ENCODE measurements at regions of chr1 and their contacts with region 1.

Region 1: DNA sequence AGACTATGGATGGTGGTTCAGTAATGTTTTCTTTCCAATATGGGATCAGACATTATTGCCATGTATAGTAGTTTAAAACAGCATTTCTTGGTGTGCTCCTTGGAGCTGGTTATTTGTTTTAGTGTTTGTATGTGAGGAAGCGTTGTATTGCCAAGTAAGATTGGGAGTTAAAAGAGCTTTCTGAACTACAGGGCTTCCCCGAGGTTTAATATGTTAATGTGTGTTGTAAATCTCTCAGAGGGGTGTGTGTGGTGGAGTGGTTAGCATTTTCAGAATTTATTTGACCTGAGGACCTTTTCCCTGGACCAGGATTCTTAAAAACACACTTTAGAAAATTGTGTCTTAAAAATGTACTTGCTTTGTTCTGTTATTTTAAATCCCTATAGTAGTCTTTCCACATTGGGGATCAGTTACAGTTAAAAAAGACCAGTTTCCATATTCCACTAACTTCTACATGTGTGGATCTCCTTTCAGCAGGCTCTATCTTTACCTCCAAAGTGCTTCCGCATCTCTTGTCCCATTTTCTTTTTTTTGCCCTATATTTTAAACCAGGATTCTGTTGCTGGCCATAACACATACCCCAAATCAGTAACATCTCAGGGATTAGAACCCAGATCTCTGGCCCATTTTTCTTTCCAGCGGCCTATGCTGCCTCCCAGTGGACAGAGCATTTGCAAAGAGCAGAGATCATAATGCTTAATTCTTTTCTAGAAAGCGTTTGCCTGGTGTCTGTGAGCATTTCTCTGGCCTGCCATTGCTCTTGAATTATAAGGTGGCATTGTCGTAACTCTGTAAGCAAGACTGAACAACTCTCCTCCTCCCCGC is 58.6 kb downstream of the PBX1 start:
- DNase-seq: peak; percentile 32
- H3K4me3 ChIP-seq: no peak overlapping the region
- H3K27ac ChIP-seq: no peak overlapping the region
- H3K4me1 ChIP-seq: peaks cover 10% of the 10 kb centered on the region
- H3K27me3 ChIP-seq: no peaks in the 10 kb centered on the region
- CTCF ChIP-seq: peak; percentile 38 to 46
- POLR2A ChIP-seq: no peak

Region 2: DNA sequence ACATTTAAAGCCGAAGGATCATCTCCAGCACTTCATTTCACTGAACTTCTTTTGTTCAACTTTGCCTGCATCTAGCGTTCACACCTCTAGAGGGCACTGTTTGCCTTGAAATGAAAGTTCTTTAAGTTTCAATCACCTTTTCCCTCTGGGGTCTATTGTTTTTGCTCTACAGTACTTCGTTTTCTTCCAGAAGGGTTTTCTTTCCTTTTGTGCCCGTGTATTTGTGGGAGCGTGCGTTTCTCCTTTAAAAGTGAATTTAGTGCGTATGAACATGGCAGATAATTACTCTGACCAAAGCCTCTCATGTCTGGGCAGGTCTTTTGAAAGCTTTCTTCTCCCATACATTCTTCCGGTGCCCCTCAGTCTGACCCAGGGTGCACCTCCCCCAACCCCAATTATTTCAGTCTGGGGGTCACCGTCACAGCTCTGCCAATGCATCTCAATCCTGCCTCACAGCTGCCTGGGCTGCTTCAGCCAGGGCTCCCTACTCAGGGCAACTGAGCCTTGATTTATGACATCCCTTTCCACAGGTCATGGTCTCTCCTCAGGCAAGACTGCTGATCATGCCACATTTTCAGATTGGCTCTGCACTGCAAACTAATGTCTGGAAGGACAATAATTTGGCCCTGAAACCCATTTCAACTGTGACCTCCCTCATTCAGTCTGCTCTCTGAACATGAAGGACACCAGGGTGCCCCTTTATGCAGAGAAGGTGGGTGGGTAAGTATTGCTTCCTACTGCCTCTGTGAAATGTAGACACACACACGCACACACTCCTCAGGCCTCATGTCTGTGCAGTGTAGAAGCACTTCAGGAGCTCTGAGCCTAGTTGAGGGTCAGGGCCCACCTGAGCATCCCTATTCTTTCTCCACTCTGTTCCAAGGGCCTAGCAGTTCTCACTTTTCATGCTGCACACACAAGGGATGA is 1207.3 kb before region 1 on chr1:
- CTCF ChIA-PET with region 1: interaction called, 3 read pairs
- POLR2A ChIA-PET with region 1: no interaction called
- dilution Hi-C with region 1: no loop called
- intact Hi-C with region 1: loop called (anchors 1 kb)
- DNase-seq: peak; percentile 66
- H3K4me3 ChIP-seq: no peak overlapping the region
- H3K27ac ChIP-seq: no peak overlapping the region
- H3K4me1 ChIP-seq: no peaks in the 10 kb centered on the region
- H3K27me3 ChIP-seq: peaks cover 0 to 2% of the 10 kb centered on the region in 2 experiments
- CTCF ChIP-seq: peak; percentile 67 to 72
- POLR2A ChIP-seq: no peak

Region 3: GRCh38 chr1:163528710-163529348 is 1088.8 kb before region 1 on chr1:
- CTCF ChIA-PET with region 1: interaction called, 3 read pairs
- POLR2A ChIA-PET with region 1: no interaction called
- dilution Hi-C with region 1: no loop called
- intact Hi-C with region 1: loop called (anchors 5 kb)
- DNase-seq: peak; percentile 48
- H3K4me3 ChIP-seq: no peak overlapping the region
- H3K27ac ChIP-seq: no peak overlapping the region
- H3K4me1 ChIP-seq: no peaks in the 10 kb centered on the region
- H3K27me3 ChIP-seq: no peaks in the 10 kb centered on the region
- CTCF ChIP-seq: peak; percentile 21 to 34
- POLR2A ChIP-seq: no peak

Region 4: GRCh38 chr1:163561580-163562295 is 1055.9 kb before region 1 on chr1:
- CTCF ChIA-PET with region 1: interaction called, 14 read pairs
- POLR2A ChIA-PET with region 1: no interaction called
- dilution Hi-C with region 1: no loop called
- intact Hi-C with region 1: no loop called
- DNase-seq: peak; percentile 27
- H3K4me3 ChIP-seq: no peak overlapping the region
- H3K27ac ChIP-seq: no peak overlapping the region
- H3K4me1 ChIP-seq: no peaks in the 10 kb centered on the region
- H3K27me3 ChIP-seq: no peaks in the 10 kb centered on the region
- CTCF ChIP-seq: peak; percentile 17 to 18
- POLR2A ChIP-seq: no peak

Region 5: GRCh38 chr1:163820766-163821165 is 796.8 kb before region 1 on chr1:
- CTCF ChIA-PET with region 1: no interaction called
- POLR2A ChIA-PET with region 1: no interaction called
- dilution Hi-C with region 1: no loop called
- intact Hi-C with region 1: loop called (anchors 5 kb)
- DNase-seq: peak; percentile 11
- H3K4me3 ChIP-seq: no peak overlapping the region
- H3K27ac ChIP-seq: no peak overlapping the region
- H3K4me1 ChIP-seq: no peaks in the 10 kb centered on the region
- H3K27me3 ChIP-seq: no peaks in the 10 kb centered on the region
- CTCF ChIP-seq: no peak
- POLR2A ChIP-seq: no peak

Region 6: DNA sequence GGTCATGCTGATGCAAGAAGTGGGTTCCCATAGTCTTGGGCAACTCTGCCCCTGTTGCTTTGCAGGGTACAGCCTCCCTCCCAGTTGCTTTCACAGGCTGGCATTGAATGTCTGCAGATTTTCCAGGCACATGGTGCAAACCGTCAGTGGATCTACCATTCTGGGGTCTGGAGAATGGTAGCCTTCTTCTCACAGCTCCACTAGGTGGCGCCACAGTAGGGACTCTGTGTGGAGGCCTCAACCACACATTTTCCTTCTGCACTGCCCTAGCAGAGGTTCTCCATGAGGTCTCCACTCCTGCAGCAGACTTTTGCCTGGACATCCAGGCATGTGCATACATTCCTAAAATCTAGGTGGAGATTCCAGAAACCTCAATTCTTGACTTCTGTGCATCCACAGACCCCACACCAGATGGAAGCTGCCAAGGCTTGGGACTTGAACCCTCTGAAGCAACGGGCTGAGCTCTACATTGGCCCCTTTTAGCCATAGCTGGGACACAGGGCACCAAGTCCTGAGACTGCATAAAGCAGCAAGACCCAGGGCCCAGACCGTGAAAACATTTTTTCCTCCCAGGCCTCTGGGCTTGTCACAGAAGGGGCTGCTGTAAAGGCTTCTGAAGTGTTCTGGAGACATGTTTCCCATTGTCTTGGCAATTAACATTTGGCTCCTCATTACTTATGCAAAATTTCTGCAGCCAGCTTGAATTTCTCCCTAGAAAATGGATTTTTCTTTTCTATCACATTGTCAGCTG is 524.8 kb before region 1 on chr1:
- CTCF ChIA-PET with region 1: interaction called, 3 read pairs
- POLR2A ChIA-PET with region 1: no interaction called
- dilution Hi-C with region 1: no loop called
- intact Hi-C with region 1: loop called (anchors 2 kb)
- DNase-seq: no peak
- H3K4me3 ChIP-seq: no peak overlapping the region
- H3K27ac ChIP-seq: no peak overlapping the region
- H3K4me1 ChIP-seq: no peaks in the 10 kb centered on the region
- H3K27me3 ChIP-seq: no peaks in the 10 kb centered on the region
- CTCF ChIP-seq: peak; percentile 9 to 33
- POLR2A ChIP-seq: no peak

Region 7: GRCh38 chr1:166365081-166365480 is 1747.5 kb after region 1 on chr1:
- CTCF ChIA-PET with region 1: no interaction called
- POLR2A ChIA-PET with region 1: no interaction called
- dilution Hi-C with region 1: no loop called
- intact Hi-C with region 1: no loop called
- DNase-seq: no peak
- H3K4me3 ChIP-seq: no peak overlapping the region
- H3K27ac ChIP-seq: no peak overlapping the region
- H3K4me1 ChIP-seq: no peaks in the 10 kb centered on the region
- H3K27me3 ChIP-seq: no peaks in the 10 kb centered on the region
- CTCF ChIP-seq: no peak
- POLR2A ChIP-seq: no peak

Measured in endothelial cell of umbilical vein (primary cell).